WTC11 (cell line): ENCODE measurements at regions of chr3 and their contacts with region 1.

Region 1: DNA sequence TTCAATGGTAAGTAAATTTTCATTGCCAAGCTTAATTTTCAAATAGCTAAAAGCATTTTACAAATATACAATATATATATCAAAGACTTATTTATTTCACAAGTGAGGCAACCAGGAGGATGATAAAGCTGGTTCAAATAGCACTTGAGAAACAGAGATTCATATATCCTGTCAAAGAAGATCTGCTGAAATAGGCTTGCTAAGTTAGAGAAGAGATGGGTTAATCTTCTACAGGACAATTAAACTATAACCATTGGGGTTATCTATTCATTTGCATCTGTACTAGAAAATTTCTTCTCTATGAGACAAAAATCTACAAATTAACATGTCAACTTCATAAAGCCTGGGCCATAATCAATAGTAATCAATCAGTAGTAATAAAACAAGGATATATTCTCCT is 637.7 kb upstream of the UBE2E2 start:
- DNase-seq: no peak
- ATAC-seq: no peak
- H3K4me3 Mint-ChIP-seq: no peak overlapping the region
- H3K27ac Mint-ChIP-seq: no peak overlapping the region
- H3K4me1 Mint-ChIP-seq: 0 out of 2 replicates have a peak, but pooled peaks cover 2% of the 10 kb centered on the region
- H3K27me3 Mint-ChIP-seq: no peaks in the 10 kb centered on the region
- CTCF ChIP-seq: no peak

Region 2: DNA sequence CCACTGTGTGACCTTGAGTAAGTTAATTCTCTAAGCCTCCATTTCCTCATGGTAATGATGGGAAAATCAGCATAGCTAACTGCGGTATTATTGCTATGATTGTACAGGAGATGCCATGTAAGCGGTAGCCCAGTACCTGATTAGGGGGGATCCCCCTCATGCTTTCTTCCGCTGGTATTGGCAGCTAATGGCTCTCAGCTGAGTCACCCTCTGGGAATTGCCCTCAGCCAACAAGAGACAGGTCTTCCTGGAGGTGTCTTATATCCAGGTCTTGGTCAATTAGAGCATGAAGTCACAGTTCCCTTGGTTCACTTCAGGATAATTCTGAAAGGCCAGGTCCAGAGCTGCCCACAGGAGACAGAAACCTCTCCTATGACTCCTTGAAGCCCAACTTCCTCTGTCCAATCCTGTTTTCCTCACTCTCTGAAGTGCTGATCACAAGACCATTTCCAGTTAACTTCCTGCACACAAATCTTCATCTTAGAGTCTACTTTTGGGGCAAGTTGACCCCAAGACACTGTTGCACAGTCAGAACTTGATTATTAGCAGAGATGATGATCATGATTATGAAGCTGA is 89.6 kb before region 1 on chr3:
- CTCF ChIA-PET with region 1: no interaction called
- POLR2A ChIA-PET with region 1: no interaction called
- DNase-seq: no peak
- ATAC-seq: no peak
- H3K4me3 Mint-ChIP-seq: no peak overlapping the region
- H3K27ac Mint-ChIP-seq: no peak overlapping the region
- H3K4me1 Mint-ChIP-seq: no peaks in the 10 kb centered on the region
- H3K27me3 Mint-ChIP-seq: no peaks in the 10 kb centered on the region
- CTCF ChIP-seq: no peak

Region 3: DNA sequence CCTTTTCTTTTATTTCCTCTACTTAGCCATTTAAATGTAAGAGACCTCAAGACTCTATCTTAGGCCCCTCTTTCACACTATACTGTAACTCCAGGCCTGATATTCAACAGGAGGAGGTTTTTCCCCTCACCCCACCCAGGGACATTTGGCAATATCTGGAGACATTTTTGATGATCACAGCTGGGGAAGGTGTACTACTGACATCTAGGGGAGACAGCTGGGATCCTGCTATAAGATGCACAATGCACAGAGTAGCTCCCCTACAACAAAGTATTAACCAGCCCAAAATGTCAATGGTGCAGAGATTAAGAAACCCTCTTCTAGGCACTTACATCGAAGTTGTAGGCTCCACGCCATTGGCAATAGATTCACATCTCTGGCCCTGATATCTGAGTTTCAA is 120.2 kb after region 1 on chr3:
- CTCF ChIA-PET with region 1: interaction called, 18 read pairs
- POLR2A ChIA-PET with region 1: no interaction called
- DNase-seq: no peak
- ATAC-seq: peak; percentile 94
- H3K4me3 Mint-ChIP-seq: no peak overlapping the region
- H3K27ac Mint-ChIP-seq: no peak overlapping the region
- H3K4me1 Mint-ChIP-seq: peaks cover 3% of the 10 kb centered on the region
- H3K27me3 Mint-ChIP-seq: no peaks in the 10 kb centered on the region
- CTCF ChIP-seq: no peak

Region 4: GRCh38 chr3:22887664-22888291 is 322.4 kb after region 1 on chr3:
- CTCF ChIA-PET with region 1: interaction called, 11 read pairs
- POLR2A ChIA-PET with region 1: no interaction called
- DNase-seq: peak; percentile 16
- ATAC-seq: peak; percentile 51; the same call in 1 of the 2 replicates
- H3K4me3 Mint-ChIP-seq: no peak overlapping the region
- H3K27ac Mint-ChIP-seq: no peak overlapping the region
- H3K4me1 Mint-ChIP-seq: peaks cover 3% of the 10 kb centered on the region; the same call in 1 of the 2 replicates
- H3K27me3 Mint-ChIP-seq: no peaks in the 10 kb centered on the region
- CTCF ChIP-seq: peak; percentile 37; the same call in 1 of the 2 replicates

Region 5: DNA sequence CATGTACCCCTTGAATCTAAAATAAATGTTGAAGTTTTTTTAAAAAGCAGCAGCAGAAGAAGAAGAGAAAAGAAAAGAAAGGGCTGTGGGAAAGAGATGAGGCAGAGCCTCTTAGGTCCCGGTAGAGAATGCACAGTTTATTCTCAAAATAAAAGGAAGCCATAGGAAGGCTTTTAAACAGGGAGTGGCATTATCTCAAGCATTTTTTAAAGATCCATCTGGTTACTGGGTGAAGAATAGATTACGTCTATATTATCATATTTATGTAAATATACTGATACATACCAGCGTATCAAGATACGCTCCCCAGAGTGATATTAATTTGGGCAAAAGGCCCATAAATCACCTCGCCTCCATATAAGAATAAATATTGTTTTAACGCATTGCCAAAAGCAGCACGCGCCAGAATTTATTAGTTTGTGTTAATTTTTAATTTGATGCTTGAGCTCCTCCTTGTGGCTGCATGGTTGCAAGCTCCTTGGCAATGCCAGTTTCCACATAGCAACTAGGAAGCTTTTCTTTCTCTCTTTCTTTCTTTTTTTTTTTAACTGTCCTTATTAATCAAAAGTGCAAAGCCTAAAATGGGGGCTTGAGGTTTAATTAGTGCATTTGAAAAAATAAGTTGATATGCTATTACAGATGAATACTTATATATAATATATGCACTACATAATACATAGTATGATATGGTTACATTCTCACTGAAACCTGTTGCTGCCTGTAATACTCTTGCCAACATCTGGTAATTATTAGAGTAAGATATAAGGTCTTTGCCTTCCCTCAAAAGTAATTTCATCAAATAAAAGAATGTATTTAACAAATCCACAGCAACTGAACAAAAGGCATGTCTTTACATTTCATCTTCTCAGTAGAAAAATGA is 395.0 kb after region 1 on chr3:
- CTCF ChIA-PET with region 1: interaction called, 10 read pairs
- POLR2A ChIA-PET with region 1: no interaction called
- DNase-seq: peak; percentile 17
- ATAC-seq: no peak
- H3K4me3 Mint-ChIP-seq: no peak overlapping the region
- H3K27ac Mint-ChIP-seq: no peak overlapping the region
- H3K4me1 Mint-ChIP-seq: peaks cover 14% of the 10 kb centered on the region
- H3K27me3 Mint-ChIP-seq: no peaks in the 10 kb centered on the region
- CTCF ChIP-seq: peak; percentile 48